Activated B cell treated with CpG ODN at 0.5 μM for 24 hours (primary cell): ENCODE measurements at regions of chr15 and their contacts with region 1.

Region 1: GRCh38 chr15:65869127-65869953 is at the start of gene RAB11A:
- DNase-seq: peak; percentile 94
- ATAC-seq: peak; percentile 94
- H3K4me3 Mint-ChIP-seq: peak within 1 kb of the TSS; percentile 99
- H3K27ac Mint-ChIP-seq: peak within 1 kb of the TSS; percentile 97
- H3K4me1 Mint-ChIP-seq: peaks cover 29% of the 10 kb centered on the region
- H3K27me3 Mint-ChIP-seq: peaks cover 4% of the 10 kb centered on the region
- CTCF ChIP-seq: no peak
- total RNA-seq, gene RAB11A: 98.2 and 104 TPM in 2 replicates

Region 2: GRCh38 chr15:65751431-65751830 is 117.9 kb before region 1 on chr15:
- CTCF ChIA-PET with region 1: interaction called, 5 read pairs
- POLR2A ChIA-PET with region 1: interaction called, 10 read pairs
- intact Hi-C with region 1: no loop called
- DNase-seq: no peak
- ATAC-seq: no peak
- H3K4me3 Mint-ChIP-seq: no peak overlapping the region
- H3K27ac Mint-ChIP-seq: peak overlapping the region; percentile 57
- H3K4me1 Mint-ChIP-seq: peaks cover 24% of the 10 kb centered on the region
- H3K27me3 Mint-ChIP-seq: no peaks in the 10 kb centered on the region
- CTCF ChIP-seq: no peak

Region 3: DNA sequence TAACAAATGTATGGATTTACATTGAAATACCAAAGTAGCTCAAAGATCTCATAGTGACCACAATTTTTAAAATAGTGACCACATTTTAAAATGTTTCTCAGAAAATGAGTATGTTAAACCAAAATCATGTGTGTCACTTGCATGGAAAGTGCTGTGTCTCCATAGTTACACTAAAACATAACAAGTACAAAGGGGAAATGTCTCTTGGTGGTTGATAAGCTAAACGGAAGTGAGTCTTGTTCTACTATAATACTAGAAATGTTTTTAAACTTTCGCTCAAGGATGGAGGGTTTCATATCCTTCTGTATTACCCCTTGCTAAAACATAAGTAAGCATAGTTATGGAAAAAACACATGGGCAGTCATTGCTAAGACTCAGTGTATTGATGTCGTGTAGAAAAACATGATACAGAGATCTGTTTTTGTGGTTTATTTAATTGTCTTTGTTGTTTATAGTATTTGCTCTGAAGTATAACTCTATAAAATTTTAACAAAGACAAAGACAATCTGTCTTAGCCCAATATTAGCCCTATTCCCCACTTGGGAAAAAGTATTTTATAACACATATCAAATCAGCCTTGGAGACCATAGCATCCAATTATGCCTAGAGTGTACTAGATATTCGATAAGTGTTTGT is 50.3 kb before region 1 on chr15:
- CTCF ChIA-PET with region 1: interaction called, 3 read pairs
- POLR2A ChIA-PET with region 1: interaction called, 21 read pairs
- intact Hi-C with region 1: loop called (anchors 1 kb)
- DNase-seq: no peak
- ATAC-seq: peak; percentile 79
- H3K4me3 Mint-ChIP-seq: peak overlapping the region; percentile 57
- H3K27ac Mint-ChIP-seq: peak overlapping the region; percentile 95
- H3K4me1 Mint-ChIP-seq: peaks cover 76% of the 10 kb centered on the region
- H3K27me3 Mint-ChIP-seq: no peaks in the 10 kb centered on the region
- CTCF ChIP-seq: no peak

Region 4: DNA sequence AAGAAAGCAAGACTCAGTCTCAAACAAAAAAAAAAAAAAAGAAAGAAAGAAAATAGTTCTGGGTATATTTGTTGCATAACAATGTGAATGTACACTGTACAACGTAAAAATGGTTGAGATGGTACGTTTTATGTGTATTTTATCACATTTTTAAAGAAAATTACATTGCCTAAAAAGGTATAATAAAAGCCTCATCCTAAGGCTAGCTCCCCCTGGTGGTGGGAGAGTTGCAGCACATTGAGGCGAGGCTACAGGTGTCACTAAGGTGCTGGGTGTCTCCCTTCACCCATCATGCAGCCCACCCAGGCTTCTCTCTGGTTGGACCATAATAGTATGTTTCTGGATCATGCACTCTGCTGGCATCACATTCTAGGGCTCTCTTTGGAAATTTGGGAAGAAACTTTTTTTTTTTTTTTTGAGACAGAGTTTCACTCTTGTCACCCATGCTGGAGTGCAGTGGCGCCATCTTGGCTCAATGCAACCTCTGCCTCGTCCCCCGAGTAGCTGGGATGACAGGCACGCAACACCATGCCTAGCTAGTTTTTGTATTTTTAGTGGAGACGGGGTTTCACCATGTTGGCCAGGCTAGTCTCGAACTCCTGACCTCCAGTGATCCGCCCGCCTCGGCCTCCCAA is 12.4 kb before region 1 on chr15:
- CTCF ChIA-PET with region 1: interaction called, 8 read pairs
- POLR2A ChIA-PET with region 1: interaction called, 18 read pairs
- intact Hi-C with region 1: no loop called
- DNase-seq: peak; percentile 47
- ATAC-seq: peak; percentile 82
- H3K4me3 Mint-ChIP-seq: no peak overlapping the region
- H3K27ac Mint-ChIP-seq: no peak overlapping the region
- H3K4me1 Mint-ChIP-seq: peaks cover 14% of the 10 kb centered on the region
- H3K27me3 Mint-ChIP-seq: no peaks in the 10 kb centered on the region
- CTCF ChIP-seq: peak; percentile 81

Region 5: DNA sequence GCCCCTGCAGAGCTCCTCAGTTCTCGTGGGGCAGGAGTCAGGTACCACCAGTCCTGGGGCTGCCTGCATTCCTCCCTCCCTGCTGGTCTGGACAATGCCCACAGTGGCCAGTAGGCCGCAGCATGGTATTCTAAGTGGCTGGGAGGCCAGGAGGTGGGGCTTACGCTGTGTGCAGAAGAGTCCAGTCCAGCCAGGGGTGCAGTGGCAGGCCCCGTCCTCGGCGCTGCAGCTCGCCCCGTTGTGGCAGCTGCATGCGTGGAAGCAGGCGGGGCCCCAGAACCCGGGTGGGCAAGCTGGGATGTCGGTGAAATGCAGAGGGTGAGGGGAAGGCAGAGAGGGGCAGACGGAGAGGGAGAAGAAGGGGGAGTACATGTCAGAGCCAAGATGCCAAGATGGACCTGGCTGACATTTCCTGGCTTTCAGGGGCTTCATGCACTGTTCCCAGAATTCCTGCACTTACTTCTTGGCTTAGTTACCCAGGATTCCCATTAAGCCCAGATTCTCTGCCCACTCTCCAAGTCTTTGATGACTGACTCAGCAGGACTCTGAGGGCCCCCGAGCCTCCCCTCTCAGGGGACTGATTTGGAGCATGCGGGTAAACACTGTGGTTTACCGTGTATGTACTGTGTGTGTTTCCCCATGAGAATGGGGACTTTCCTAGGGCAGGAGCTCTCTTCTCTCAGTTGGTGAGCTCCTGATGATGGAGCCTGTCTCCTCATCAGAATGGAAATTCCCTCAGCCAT is 47.5 kb after region 1 on chr15:
- CTCF ChIA-PET with region 1: interaction called, 13 read pairs
- POLR2A ChIA-PET with region 1: interaction called, 23 read pairs
- intact Hi-C with region 1: loop called (anchors 2 kb)
- DNase-seq: peak; percentile 64
- ATAC-seq: peak; percentile 91
- H3K4me3 Mint-ChIP-seq: peak overlapping the region; percentile 69
- H3K27ac Mint-ChIP-seq: peak overlapping the region; percentile 64
- H3K4me1 Mint-ChIP-seq: peaks cover 72% of the 10 kb centered on the region
- H3K27me3 Mint-ChIP-seq: no peaks in the 10 kb centered on the region
- CTCF ChIP-seq: no peak

Region 6: GRCh38 chr15:66293419-66294156 is 424.2 kb after region 1 on chr15 and contains the start of gene DIS3L:
- CTCF ChIA-PET with region 1: no interaction called
- POLR2A ChIA-PET with region 1: interaction called, 5 read pairs
- intact Hi-C with region 1: loop called (anchors 2 kb)
- DNase-seq: peak; percentile 74
- ATAC-seq: peak; percentile 82
- H3K4me3 Mint-ChIP-seq: peak within 1 kb of the TSS; percentile 82
- H3K27ac Mint-ChIP-seq: peak within 1 kb of the TSS; percentile 89
- H3K4me1 Mint-ChIP-seq: peaks cover 28% of the 10 kb centered on the region
- H3K27me3 Mint-ChIP-seq: no peaks in the 10 kb centered on the region
- CTCF ChIP-seq: no peak
- total RNA-seq, gene DIS3L: 23.8 and 27.2 TPM in 2 replicates